ENCODE measurements at regions of chr22 and their contacts with region 1.

Region 1: DNA sequence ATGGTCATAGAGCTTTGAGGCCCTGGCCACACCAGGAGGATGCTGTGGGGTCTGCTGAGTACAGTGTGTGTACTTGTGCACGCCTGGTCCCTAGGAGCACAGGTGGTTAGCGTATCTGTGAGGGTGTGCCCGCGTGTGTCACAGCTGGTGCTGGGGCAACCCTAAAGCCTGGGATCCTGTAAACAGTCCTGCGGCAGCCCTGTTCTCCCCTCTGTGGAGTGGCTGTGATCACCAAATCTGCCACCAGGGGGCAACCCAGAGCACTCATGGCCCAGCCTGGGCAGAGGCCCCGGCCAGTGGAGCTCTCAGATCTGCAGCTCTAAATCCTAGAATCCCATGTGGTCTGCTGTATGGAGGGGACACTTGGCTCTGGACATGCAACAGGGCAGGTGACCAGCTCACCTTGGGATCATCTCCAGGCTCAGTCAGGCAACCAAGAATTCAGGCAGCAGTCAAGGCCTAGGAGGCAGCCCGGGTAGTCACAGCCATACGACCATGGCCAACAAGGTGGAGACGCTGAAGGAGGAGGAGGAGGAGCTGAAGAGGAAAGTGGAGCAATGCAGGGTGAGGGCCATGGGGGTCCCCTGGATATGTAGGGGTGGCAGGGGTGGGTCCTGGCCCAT is 3.9 kb downstream of the SH3BP1 start:
- DNase-seq: peak; percentile 62 to 80 (median 69)
- H3K4me3 ChIP-seq: no peak overlapping the region
- H3K27ac ChIP-seq: no peak overlapping the region
- H3K4me1 ChIP-seq: peaks cover 0 to 41% (median 27%) of the 10 kb centered on the region in 4 experiments
- H3K27me3 ChIP-seq: no peaks in the 10 kb centered on the region

Region 2: DNA sequence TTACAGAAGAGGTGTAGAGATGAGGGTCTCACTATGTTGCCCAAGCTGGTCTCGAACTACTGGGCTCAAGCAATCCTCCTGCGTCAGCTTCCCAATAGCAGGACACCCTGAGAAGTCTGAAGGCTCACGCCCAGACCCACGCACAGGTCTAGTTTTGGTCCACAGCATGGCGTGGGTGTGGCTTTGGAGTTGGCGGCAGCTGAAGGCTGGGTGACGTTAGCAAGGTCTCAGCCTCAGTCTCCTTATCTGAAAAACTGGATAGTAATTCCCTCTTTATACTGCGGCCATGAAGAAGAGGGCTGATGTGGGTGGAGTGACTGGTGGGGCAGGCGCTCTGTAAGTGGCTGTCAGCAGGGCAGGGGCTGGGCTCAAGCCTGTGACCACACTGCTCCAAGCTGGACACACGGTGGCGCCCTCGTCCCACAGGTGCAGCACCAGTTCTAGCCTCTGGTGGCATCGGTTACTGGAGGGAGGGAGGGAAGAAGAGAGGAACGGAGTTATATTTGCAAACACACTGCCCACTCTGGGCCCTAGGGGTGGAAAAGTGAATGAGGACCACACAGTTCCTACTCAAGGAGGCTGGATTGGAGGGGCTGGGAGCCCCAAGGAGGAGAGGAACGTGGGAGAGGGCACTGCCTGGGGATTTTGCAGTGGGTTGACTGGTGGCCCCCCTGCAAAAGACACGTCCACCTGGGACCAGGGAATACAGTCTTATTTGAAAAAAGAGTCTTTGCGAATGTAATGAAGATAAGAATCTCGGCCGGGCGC is 104.6 kb before region 1 on chr22:
- CTCF ChIA-PET with region 1: no interaction called
- POLR2A ChIA-PET with region 1: no interaction called
- DNase-seq: peak; percentile 91 to 97 (median 96)
- H3K4me3 ChIP-seq: peak overlapping the region in 1 of 7 experiments; percentile 38
- H3K27ac ChIP-seq: no peak overlapping the region
- H3K4me1 ChIP-seq: peaks cover 4 to 40% (median 28%) of the 10 kb centered on the region in 4 experiments
- H3K27me3 ChIP-seq: peaks cover 0 to 16% (median 6%) of the 10 kb centered on the region in 5 experiments

Region 3: GRCh38 chr22:37696657-37697537 is 53.6 kb after region 1 on chr22 and contains the start of gene TRIOBP:
- CTCF ChIA-PET with region 1: interaction called, 16 read pairs
- POLR2A ChIA-PET with region 1: no interaction called
- DNase-seq: peak; percentile 95 to 98 (median 98)
- H3K4me3 ChIP-seq: peak within 1 kb of the TSS in 5 of 7 experiments; percentile 23 to 59 (median 36)
- H3K27ac ChIP-seq: no peak within 1 kb of the TSS
- H3K4me1 ChIP-seq: peaks cover 0 to 22% (median 7%) of the 10 kb centered on the region in 4 experiments
- H3K27me3 ChIP-seq: no peaks in the 10 kb centered on the region

Region 4: GRCh38 chr22:37811867-37812266 is 168.5 kb after region 1 on chr22:
- CTCF ChIA-PET with region 1: no interaction called
- POLR2A ChIA-PET with region 1: no interaction called
- DNase-seq: no peak
- H3K4me3 ChIP-seq: no peak overlapping the region
- H3K27ac ChIP-seq: no peak overlapping the region
- H3K4me1 ChIP-seq: peaks cover 2 to 16% (median 12%) of the 10 kb centered on the region in 4 experiments
- H3K27me3 ChIP-seq: no peaks in the 10 kb centered on the region